CD14-positive monocyte (primary cell): ENCODE measurements at regions of chr15 and their contacts with region 1.

Region 1: DNA sequence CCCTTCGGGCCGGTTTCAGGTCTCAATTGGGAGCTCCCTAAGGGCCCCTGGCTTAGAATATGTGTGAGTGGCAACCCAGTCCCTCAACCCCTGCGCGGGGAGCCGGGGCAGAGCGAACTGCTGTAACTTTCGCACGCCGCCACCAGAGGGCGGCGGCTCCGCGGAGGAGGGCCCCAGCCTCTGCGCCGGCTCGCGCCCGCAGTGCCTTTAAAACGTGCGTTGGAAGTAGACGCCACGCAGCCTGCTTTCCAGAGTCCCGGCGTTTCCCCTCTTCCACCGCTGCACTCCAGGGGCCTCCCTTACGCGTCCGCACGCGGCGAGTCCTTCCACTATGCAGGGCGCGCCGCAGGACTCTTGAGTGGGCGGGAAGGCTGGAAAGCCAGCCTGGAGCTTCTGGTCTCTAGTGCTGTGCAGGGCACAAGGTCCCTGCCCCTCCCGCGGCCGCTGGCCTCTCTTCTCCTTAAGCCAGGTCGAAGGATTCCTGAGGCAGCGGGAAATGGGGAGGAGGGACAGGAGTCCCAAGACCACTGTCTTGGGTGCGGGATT is 23.7 kb upstream of the RNU6-1 start:
- DNase-seq: peak; percentile 62 to 70 (median 68)
- H3K4me3 ChIP-seq: peak overlapping the region; percentile 38 to 82 (median 53)
- H3K4me3 Mint-ChIP-seq: peak overlapping the region; percentile 83 to 93
- H3K27ac ChIP-seq: peak overlapping the region in 1 of 2 donors; percentile 41
- H3K27ac Mint-ChIP-seq: no peak overlapping the region
- H3K4me1 ChIP-seq: peaks cover 9 to 12% of the 10 kb centered on the region in 2 donors
- H3K4me1 Mint-ChIP-seq: peaks cover 8% of the 10 kb centered on the region
- H3K27me3 ChIP-seq: no peaks in the 10 kb centered on the region
- H3K27me3 Mint-ChIP-seq: peaks cover 2 to 10% (median 5%) of the 10 kb centered on the region in 3 donors
- CTCF ChIP-seq: peak; percentile 87

Region 2: GRCh38 chr15:67999320-68000100 is 136.0 kb after region 1 on chr15:
- intact Hi-C with region 1: loop called in 1 of 2 experiments (anchors 10 kb)
- DNase-seq: no peak
- H3K4me3 ChIP-seq: no peak overlapping the region
- H3K4me3 Mint-ChIP-seq: no peak overlapping the region
- H3K27ac ChIP-seq: no peak overlapping the region
- H3K27ac Mint-ChIP-seq: no peak overlapping the region
- H3K4me1 ChIP-seq: peaks cover 0 to 6% of the 10 kb centered on the region in 2 donors
- H3K4me1 Mint-ChIP-seq: peaks cover 6% of the 10 kb centered on the region
- H3K27me3 ChIP-seq: no peaks in the 10 kb centered on the region
- H3K27me3 Mint-ChIP-seq: peaks cover 0 to 4% (median 2%) of the 10 kb centered on the region in 3 donors
- CTCF ChIP-seq: no peak

Region 3: GRCh38 chr15:68154923-68155559 is 291.5 kb after region 1 on chr15:
- intact Hi-C with region 1: loop called (anchors 5 kb)
- DNase-seq: peak; percentile 12 to 17 (median 15)
- H3K4me3 ChIP-seq: no peak overlapping the region
- H3K4me3 Mint-ChIP-seq: no peak overlapping the region
- H3K27ac ChIP-seq: no peak overlapping the region
- H3K27ac Mint-ChIP-seq: peak overlapping the region in 1 of 7 donors; percentile 43
- H3K4me1 ChIP-seq: peaks cover 0 to 5% of the 10 kb centered on the region in 2 donors
- H3K4me1 Mint-ChIP-seq: peaks cover 8% of the 10 kb centered on the region
- H3K27me3 ChIP-seq: no peaks in the 10 kb centered on the region
- H3K27me3 Mint-ChIP-seq: no peaks in the 10 kb centered on the region
- CTCF ChIP-seq: peak; percentile 51